PC-3 (cell line): ENCODE measurements at regions of chr5 and their contacts with region 1.

Region 1: GRCh38 chr5:151651997-151652645 is 34.6 kb downstream of the SPARC start:
- DNase-seq: peak; percentile 91
- ATAC-seq: peak; percentile 99
- H3K4me3 ChIP-seq: no peak overlapping the region
- H3K27ac ChIP-seq: no peak overlapping the region
- H3K4me1 ChIP-seq: peaks cover 9% of the 10 kb centered on the region; the same call in 1 of the 2 replicates
- H3K27me3 ChIP-seq: no peaks in the 10 kb centered on the region
- CTCF ChIP-seq: peak; percentile 96

Region 2: GRCh38 chr5:151298063-151298855 is 353.9 kb before region 1 on chr5:
- CTCF ChIA-PET with region 1: no interaction called
- POLR2A ChIA-PET with region 1: no interaction called
- intact Hi-C with region 1: no loop called
- DNase-seq: peak; percentile 78
- ATAC-seq: peak; percentile 53
- H3K4me3 ChIP-seq: no peak overlapping the region
- H3K27ac ChIP-seq: no peak overlapping the region
- H3K4me1 ChIP-seq: peaks cover 35% of the 10 kb centered on the region
- H3K27me3 ChIP-seq: no peaks in the 10 kb centered on the region
- CTCF ChIP-seq: peak; percentile 77

Region 3: GRCh38 chr5:151499501-151500035 is 152.6 kb before region 1 on chr5:
- CTCF ChIA-PET with region 1: interaction called, 3 read pairs
- POLR2A ChIA-PET with region 1: no interaction called
- intact Hi-C with region 1: loop called (anchors 5 kb)
- DNase-seq: no peak
- ATAC-seq: no peak
- H3K4me3 ChIP-seq: no peak overlapping the region
- H3K27ac ChIP-seq: no peak overlapping the region
- H3K4me1 ChIP-seq: no peaks in the 10 kb centered on the region
- H3K27me3 ChIP-seq: no peaks in the 10 kb centered on the region
- CTCF ChIP-seq: no peak

Region 4: GRCh38 chr5:151523335-151523734 is 128.8 kb before region 1 on chr5:
- CTCF ChIA-PET with region 1: interaction called, 26 read pairs
- POLR2A ChIA-PET with region 1: interaction called, 3 read pairs
- intact Hi-C with region 1: loop called (anchors 1 kb)
- DNase-seq: peak; percentile 76
- ATAC-seq: peak; percentile 88
- H3K4me3 ChIP-seq: no peak overlapping the region
- H3K27ac ChIP-seq: no peak overlapping the region
- H3K4me1 ChIP-seq: peaks cover 5% of the 10 kb centered on the region; the same call in 1 of the 2 replicates
- H3K27me3 ChIP-seq: no peaks in the 10 kb centered on the region
- CTCF ChIP-seq: peak; percentile 81

Region 5: DNA sequence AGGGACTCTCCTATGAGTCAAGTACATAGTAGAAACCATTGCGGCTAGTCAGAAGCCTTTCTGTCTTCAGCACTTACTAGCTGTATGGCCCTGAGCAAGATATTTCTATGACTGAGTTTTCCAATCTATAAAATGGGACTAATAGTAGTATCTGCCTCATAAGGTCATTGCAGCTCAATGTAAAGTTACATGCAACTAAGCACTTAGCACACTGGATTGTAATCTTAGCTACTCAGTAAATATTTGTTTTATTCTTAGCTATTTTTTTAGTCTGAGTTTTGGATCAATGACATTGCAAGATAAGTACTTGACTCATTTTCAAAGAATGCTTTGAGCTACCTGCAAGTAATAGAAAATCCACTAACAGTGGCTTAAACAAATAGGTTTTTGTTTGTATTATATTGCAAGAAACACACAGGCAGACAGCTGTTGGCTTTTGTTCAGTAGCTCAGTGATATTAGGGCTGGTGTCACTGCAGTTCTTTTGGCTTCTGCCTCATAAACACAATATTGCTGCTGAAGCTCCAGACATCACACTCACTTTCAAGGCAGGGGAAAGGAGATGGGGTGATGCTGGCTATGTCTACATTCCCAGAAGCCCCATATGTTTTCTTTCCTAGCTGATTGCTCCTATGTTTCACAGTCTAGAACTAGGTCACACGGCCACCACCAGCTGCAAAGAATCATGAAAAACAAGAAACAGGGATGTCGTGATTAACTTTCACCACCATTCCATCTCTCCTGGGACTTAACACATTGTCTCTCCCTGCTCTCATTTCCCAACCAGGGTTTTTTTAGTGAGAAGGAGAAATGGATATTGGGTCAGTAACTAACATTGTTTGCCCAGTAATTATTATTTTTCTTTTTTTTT is 34.0 kb before region 1 on chr5:
- CTCF ChIA-PET with region 1: interaction called, 11 read pairs
- POLR2A ChIA-PET with region 1: no interaction called
- intact Hi-C with region 1: no loop called
- DNase-seq: peak; percentile 95
- ATAC-seq: peak; percentile 54
- H3K4me3 ChIP-seq: no peak overlapping the region
- H3K27ac ChIP-seq: peak overlapping the region; percentile 73
- H3K4me1 ChIP-seq: peaks cover 75% of the 10 kb centered on the region
- H3K27me3 ChIP-seq: no peaks in the 10 kb centered on the region
- CTCF ChIP-seq: no peak